PC-3 (cell line): ENCODE measurements at regions of chr4 and their contacts with region 1.

Region 1: DNA sequence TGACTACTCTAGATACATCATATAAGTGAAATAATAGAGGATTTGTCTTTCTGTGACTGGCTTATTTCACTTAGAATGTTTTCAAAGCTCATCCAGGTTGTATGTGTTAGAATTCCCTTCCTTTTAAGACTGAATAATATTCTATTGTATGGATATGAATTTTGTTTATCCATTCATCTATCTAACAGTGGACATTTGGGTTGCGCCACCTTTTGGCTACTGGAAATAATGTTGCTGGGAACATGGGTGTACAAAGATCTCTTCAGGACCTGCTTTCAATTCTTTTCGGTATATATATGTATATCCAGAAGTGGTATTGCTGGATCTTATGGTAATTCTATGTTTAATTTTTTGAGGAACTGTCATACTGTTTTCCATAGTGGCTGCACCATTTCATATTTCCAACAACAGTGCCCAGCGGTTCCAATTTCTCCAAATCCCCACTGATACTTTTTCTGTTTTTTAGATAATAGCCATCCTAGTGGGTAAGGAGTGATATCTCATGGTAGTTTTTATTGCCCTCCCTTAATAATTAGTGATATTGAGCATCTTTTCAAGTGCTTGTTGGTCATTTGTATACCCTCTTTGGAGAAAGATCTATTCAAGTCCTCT is 3.4 kb upstream of the SCD5 start:
- DNase-seq: peak; percentile 49
- ATAC-seq: peak; percentile 43
- H3K4me3 ChIP-seq: no peak overlapping the region
- H3K27ac ChIP-seq: no peak overlapping the region
- H3K4me1 ChIP-seq: 0 out of 2 replicates have a peak, but pooled peaks cover 3% of the 10 kb centered on the region
- H3K27me3 ChIP-seq: peaks cover 6% of the 10 kb centered on the region
- CTCF ChIP-seq: peak; percentile 69

Region 2: DNA sequence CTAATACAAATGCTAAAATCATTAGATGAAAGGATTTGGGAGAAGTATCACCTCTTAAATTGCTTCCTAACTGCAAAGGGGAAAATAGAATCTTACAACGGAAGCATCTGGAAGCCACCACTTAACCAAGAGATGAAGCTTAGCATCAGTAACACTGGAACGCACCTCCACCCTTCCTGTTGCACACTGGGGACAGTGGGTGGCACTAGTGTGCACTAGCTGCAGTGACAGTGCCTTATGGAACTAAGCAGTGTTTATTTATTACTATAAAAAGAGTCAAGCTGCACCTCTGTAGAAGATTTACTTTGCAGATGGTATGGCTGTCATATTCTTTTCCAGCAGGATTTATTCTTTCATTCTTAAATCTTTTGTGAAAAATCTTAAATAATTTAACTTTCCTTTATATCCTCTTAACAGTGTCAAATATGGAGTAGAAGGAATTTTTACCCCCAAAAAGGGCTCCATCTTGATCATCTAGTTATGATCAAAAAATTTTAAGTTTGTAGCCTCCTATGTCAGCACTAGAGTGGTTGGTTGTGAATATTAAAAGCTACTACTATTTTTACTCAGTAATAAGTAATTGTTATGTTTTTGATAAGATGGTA is 80.1 kb before region 1 on chr4:
- CTCF ChIA-PET with region 1: no interaction called
- POLR2A ChIA-PET with region 1: no interaction called
- intact Hi-C with region 1: loop called (anchors 2 kb)
- DNase-seq: peak; percentile 52
- ATAC-seq: peak; percentile 81
- H3K4me3 ChIP-seq: no peak overlapping the region
- H3K27ac ChIP-seq: no peak overlapping the region
- H3K4me1 ChIP-seq: no peaks in the 10 kb centered on the region
- H3K27me3 ChIP-seq: no peaks in the 10 kb centered on the region
- CTCF ChIP-seq: peak; percentile 65

Region 3: DNA sequence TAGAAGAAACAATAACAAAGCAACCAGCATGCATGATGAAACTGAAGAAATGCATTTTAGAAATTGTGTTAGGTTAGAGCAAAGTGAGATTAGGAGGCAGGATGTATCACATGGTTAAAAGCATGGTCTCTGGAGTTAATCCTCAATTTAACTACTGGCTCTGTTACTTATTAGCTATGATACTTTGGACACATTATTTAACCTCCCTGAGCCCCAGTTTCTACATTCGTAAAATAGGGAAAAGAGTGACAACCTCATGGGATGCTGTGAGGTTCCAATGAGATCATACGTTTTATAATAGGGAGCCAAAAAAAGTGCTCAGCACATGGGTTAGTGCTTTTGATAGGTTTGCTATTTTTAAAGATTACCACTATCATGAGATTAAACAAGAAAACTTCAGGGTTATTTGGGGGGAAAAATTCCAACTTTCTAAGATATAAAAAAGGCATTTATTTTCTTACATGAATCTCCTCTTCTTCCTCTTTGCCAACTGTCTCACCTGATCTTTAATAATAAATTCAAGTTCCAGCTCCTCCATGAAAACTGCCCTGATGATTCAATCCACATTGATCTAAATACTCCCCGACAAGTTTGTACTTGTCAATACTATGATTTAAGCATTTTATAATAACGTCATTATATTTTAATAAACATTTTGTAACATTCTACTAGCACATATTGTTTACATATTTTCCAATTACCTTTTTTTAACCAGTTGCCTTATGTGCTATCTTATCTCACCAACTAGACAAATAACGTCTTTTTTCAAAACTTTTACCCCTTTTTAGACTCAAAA is 84.3 kb after region 1 on chr4:
- CTCF ChIA-PET with region 1: no interaction called
- POLR2A ChIA-PET with region 1: no interaction called
- intact Hi-C with region 1: no loop called
- DNase-seq: no peak
- ATAC-seq: no peak
- H3K4me3 ChIP-seq: no peak overlapping the region
- H3K27ac ChIP-seq: no peak overlapping the region
- H3K4me1 ChIP-seq: peaks cover 24% of the 10 kb centered on the region
- H3K27me3 ChIP-seq: no peaks in the 10 kb centered on the region
- CTCF ChIP-seq: no peak

Region 4: GRCh38 chr4:83189631-83190136 is 387.7 kb after region 1 on chr4:
- CTCF ChIA-PET with region 1: no interaction called
- POLR2A ChIA-PET with region 1: no interaction called
- intact Hi-C with region 1: no loop called
- DNase-seq: no peak
- ATAC-seq: no peak
- H3K4me3 ChIP-seq: no peak overlapping the region
- H3K27ac ChIP-seq: no peak overlapping the region
- H3K4me1 ChIP-seq: no peaks in the 10 kb centered on the region
- H3K27me3 ChIP-seq: no peaks in the 10 kb centered on the region
- CTCF ChIP-seq: no peak